Lower leg skin (tissue), 4 donors: ENCODE measurements at regions of chr4 and their contacts with region 1.

Region 1: DNA sequence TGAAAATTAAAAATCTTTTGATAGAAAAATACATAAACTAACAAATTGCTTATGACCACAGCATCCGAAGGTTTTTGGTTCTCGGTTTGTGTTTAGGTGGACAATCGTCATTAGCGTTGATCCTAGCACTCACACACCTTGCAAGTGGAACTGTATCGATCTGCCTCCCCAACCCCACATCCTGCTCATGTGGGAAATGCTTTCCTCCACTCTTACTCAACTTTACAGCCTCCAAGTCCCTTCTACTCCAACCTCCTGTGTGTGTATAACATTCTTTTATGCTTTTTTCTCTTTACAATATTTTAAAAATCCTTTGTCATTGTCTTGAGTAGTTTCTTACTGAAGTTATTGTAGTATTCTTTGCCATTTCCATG is 15.6 kb upstream of the TMEM131L start:
- DNase-seq: no peak
- H3K4me3 ChIP-seq: no peak overlapping the region
- CTCF ChIP-seq: no peak
- POLR2A ChIP-seq: no peak

Region 2: DNA sequence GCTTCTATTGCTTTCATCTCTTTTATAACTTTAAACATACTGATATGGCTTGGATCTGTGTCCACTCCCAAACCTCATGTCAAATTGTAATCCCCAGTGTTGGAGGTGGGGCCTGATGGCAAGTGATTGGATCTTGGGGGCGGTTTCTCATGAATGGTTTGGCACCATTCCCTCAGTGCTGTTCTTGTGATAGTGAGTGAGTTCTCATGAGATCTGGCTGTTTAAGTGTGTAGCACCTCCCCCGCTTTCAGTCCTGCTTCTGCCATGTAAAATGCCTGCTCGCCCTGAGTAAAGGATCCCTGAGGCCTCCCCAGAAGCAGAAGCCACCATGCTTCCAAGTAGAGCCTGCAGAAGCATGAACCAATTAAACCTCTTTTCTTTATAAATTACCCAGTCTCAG is 88.3 kb before region 1 on chr4:
- intact Hi-C with region 1: no loop called
- DNase-seq: no peak
- H3K4me3 ChIP-seq: no peak overlapping the region
- CTCF ChIP-seq: no peak
- POLR2A ChIP-seq: no peak

Region 3: DNA sequence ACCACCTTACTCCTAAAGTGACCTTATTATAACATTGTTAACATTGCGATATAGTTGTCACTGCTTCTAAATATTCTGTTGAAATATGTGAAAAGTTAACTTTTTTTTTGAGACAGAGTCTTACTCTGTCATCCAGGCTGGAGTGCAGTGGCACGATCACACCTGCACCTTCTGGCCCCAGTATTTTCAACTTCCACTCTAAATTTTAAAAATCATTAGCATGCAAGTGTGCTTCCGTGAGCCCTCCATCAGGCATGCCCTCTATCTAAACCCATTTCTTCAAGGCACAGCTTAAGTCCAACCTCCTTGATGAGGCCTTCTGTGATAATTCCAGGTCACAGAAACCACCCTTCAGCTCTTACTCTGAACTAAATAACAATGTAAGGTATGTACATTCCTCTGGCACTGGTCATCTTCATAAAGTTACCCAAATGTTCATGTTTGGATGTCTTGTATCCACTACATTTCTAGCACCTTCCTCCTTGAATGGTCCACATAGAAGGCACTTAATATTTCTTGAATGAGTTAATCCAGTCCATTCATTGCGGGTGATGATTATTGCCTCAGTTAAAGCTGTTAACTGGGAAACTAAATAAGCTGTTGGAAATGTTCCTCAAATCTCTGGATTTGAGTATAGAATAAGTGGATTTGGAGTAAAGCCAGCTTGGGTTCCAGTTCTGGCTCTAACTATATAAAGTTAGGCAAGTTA is 23.0 kb before region 1 on chr4:
- intact Hi-C with region 1: loop called (anchors 1 kb)
- DNase-seq: no peak
- H3K4me3 ChIP-seq: no peak overlapping the region
- CTCF ChIP-seq: no peak
- POLR2A ChIP-seq: no peak

Region 4: GRCh38 chr4:153940916-153941315 is 490.4 kb after region 1 on chr4:
- intact Hi-C with region 1: no loop called
- DNase-seq: no peak
- H3K4me3 ChIP-seq: no peak overlapping the region
- CTCF ChIP-seq: no peak
- POLR2A ChIP-seq: no peak